Psoas muscle (tissue), 8 donors: ENCODE measurements at regions of chrX and their contacts with region 1.

Region 1: DNA sequence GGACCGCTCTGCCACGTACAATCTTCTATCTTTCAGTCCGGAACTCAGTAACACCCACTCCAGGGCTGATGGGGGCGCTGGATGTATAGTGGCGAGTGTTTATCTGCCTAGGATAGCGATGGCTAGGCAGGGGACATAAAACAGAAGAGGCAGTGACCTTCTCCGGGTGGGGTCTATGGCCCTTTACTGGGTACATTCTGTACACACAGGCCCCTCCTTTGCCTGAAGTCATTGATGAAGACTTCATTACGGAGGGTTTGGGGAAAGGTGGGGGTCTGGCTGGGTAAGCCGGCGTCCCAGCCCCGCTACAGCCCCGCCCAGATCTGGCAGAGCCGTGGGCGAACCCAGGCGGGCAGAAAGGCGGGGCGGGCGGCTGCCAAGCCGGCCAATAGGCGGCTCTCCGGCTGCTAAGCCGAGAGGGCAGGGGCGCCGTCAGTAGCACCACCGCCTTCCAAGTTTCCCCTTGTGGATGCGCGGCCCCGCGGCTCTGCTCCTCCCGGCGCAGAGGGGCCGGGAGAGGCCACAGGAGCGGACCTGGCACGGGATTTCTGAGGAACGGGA is at the start of gene CHST7:
- DNase-seq: peak; percentile 66 to 83
- ATAC-seq: peak; percentile 64 to 83 (median 68)
- H3K4me3 ChIP-seq: peak within 1 kb of the TSS; percentile 66
- H3K27ac ChIP-seq: peak within 1 kb of the TSS; percentile 46
- H3K4me1 ChIP-seq: no peaks in the 10 kb centered on the region
- H3K27me3 ChIP-seq: peaks cover 0 to 44% (median 0%) of the 10 kb centered on the region in 3 donors
- CTCF ChIP-seq: no peak
- total RNA-seq, gene CHST7: 1.6 to 2.9 (median 2.2) TPM

Region 2: DNA sequence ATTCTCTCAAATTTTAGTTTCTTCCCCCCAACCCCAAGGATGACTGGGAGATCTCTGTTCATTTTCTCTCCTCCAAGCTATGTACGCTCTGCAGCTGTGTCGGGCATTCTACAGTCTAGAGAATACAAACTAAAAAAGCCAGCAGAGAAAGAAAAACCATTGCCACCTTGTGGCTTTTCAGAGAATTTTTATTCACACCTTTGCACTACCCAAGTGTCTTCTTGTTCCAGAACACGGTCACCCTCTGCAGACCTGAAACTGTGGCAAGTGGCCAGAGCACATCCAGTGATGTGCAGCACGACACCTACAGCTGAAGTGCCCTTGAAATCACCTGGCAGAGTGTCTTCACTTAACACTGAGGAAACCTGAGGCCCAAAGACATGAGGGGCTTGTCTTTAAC is 68.7 kb after region 1 on chrX:
- intact Hi-C with region 1: loop called in 1 of 2 experiments (anchors 5 kb)
- DNase-seq: no peak
- ATAC-seq: peak in 1 of 4 donors; percentile 48
- H3K4me3 ChIP-seq: no peak overlapping the region
- H3K27ac ChIP-seq: no peak overlapping the region
- H3K4me1 ChIP-seq: no peaks in the 10 kb centered on the region
- H3K27me3 ChIP-seq: no peaks in the 10 kb centered on the region
- CTCF ChIP-seq: peak; percentile 25

Region 3: DNA sequence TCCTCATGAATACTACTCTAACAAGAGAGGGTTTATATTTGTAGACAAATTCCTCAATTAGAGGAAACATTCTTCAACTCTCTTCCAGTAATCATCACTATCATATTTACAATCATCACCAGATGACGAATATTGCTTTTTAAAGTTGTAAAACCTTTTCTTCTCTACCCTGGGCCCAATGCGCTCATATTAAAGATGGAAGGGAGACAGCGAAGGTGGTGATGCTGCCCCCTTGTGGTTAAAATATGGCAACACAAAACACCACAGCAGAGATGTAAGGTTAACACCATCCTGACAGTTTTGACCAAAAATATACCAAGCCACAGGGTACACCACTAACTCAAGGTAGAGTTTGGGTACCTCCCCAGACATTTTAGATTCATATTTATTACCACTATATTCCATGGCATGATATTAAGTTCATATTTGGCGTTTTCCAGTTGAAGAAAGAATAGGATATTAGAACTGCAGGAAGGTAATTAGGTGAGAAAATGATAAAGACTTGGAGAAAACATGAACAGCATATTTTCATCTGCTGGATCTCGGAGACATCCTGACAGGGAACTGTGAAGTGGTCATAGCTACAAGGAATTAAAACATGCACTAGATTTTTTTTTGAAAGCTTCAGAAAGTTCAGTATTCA is 112.7 kb after region 1 on chrX:
- intact Hi-C with region 1: no loop called
- DNase-seq: no peak
- ATAC-seq: no peak
- H3K4me3 ChIP-seq: no peak overlapping the region
- H3K27ac ChIP-seq: no peak overlapping the region
- H3K4me1 ChIP-seq: no peaks in the 10 kb centered on the region
- H3K27me3 ChIP-seq: no peaks in the 10 kb centered on the region
- CTCF ChIP-seq: peak; percentile 59

Region 4: GRCh38 chrX:46796574-46797191 is 223.3 kb after region 1 on chrX:
- intact Hi-C with region 1: loop called in 1 of 2 experiments (anchors 10 kb)
- DNase-seq: peak; percentile 73 to 79
- ATAC-seq: peak; percentile 66 to 75 (median 72)
- H3K4me3 ChIP-seq: no peak overlapping the region
- H3K27ac ChIP-seq: no peak overlapping the region
- H3K4me1 ChIP-seq: no peaks in the 10 kb centered on the region
- H3K27me3 ChIP-seq: no peaks in the 10 kb centered on the region
- CTCF ChIP-seq: peak; percentile 75